Esophagus muscularis mucosa (tissue), 4 donors: ENCODE measurements at regions of chr3 and their contacts with region 1.

Region 1: DNA sequence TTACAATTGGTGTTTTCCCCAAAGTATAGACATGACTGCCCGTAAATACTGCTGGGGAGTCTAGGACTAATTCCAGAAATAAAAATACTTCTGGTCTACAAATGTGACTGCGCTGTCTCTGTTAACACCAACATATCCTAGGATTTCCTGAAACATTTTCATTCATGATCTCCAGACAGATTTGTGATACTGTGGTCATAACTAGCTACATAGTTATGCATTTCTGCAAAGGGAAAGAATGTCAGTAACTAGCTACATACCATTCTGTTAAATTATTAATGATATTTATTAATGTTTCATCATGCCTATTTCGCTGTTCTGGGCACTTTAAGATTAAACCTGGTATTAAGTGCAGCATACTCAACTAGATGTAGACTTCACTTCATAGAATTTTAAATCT is 33.3 kb downstream of the SETD5 start:
- DNase-seq: no peak
- H3K4me3 ChIP-seq: no peak overlapping the region
- H3K27ac ChIP-seq: no peak overlapping the region
- H3K4me1 ChIP-seq: peaks cover 10 to 26% (median 15%) of the 10 kb centered on the region in 4 donors
- H3K27me3 ChIP-seq: no peaks in the 10 kb centered on the region
- CTCF ChIP-seq: no peak
- EP300 ChIP-seq: no peak
- POLR2A ChIP-seq: no peak

Region 2: GRCh38 chr3:9280451-9281219 is 150.1 kb before region 1 on chr3:
- intact Hi-C with region 1: no loop called
- DNase-seq: no peak
- H3K4me3 ChIP-seq: no peak overlapping the region
- H3K27ac ChIP-seq: no peak overlapping the region
- H3K4me1 ChIP-seq: peaks cover 0 to 6% (median 0%) of the 10 kb centered on the region in 4 donors
- H3K27me3 ChIP-seq: no peaks in the 10 kb centered on the region
- CTCF ChIP-seq: no peak
- EP300 ChIP-seq: no peak
- POLR2A ChIP-seq: no peak

Region 3: DNA sequence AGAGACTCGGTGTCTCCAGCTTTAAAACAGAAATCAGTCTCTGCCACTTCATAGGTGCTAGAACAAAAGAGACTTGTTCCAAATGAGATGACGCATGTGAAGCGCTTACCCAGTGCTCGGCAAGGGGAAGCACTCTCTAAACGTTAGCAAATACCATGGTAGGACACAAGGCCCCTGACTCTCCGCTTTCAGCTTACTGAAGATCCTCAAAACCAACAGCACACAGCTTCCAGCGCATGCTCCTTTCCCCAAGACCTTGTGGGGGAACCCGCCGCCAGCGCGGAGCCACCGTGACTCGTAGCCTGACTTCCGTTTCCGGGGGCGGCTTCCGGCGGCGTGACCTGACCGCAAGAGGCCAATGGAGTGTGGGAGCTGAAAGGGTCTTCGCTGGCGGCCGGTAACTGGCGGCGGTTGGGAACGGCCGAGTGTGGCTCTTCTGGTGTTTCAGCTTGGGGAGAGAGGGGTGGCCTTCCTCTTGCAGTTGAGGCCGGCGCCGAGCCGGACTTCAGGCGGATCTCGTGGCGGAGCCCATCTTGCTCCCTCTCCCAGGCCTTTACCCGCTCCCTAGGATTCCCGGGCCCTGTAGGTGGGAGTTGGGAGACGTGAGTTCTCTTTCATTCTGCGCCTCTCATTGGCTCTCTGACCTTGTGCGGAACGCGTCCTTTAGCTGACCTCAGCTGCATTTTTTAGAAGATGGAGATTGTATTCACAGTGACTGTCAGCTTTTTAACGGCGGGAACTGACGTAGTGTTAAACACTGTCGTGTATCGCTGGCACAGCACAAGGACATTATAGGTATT is 67.8 kb before region 1 on chr3 and contains the start of gene THUMPD3:
- intact Hi-C with region 1: loop called (anchors 5 kb)
- DNase-seq: peak; percentile 97
- H3K4me3 ChIP-seq: peak within 1 kb of the TSS; percentile 69 to 78 (median 76)
- H3K27ac ChIP-seq: peak within 1 kb of the TSS; percentile 84 to 93 (median 92)
- H3K4me1 ChIP-seq: peaks cover 17 to 31% (median 25%) of the 10 kb centered on the region in 4 donors
- H3K27me3 ChIP-seq: no peaks in the 10 kb centered on the region
- CTCF ChIP-seq: no peak
- EP300 ChIP-seq: peak; percentile 28
- POLR2A ChIP-seq: peak; percentile 63
- total RNA-seq, gene THUMPD3: 23.8 to 37.4 (median 26.1) TPM

Region 4: DNA sequence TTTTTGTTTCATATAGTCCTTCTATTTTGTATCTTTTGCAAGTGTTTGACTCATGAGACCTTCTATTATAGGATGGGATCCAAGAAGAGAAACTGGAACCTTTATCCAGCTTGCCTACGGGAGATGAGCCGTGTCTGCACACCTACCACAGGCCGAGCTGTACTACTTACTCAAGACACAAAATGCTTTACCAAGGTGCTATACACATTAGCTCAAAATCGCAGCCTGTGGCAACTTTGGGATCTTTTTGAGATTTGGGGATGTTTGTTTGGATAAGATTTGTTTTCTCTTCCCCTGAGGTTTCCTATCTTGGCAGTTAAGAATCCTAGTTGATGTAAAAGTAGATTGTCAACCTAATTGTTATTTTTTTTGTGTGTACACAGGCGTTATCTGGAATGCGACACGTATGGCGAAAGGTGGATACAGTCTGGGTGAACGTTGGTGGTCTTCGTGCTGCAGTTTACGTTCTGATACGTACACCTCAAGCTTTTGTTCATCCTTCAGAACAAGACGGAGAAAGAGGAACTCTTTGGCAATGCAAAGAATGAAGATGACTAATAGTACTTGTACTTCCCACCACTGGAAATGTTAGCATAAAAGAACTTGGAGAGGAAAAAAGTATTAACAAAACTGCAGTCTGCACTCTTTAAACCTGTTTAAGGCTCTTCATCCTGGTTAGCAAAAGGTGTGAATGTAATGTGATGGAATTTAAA is 46.4 kb before region 1 on chr3:
- intact Hi-C with region 1: loop called (anchors 5 kb)
- DNase-seq: no peak
- H3K4me3 ChIP-seq: no peak overlapping the region
- H3K27ac ChIP-seq: peak overlapping the region in 1 of 4 donors; percentile 28
- H3K4me1 ChIP-seq: peaks cover 0 to 3% (median 2%) of the 10 kb centered on the region in 4 donors
- H3K27me3 ChIP-seq: no peaks in the 10 kb centered on the region
- CTCF ChIP-seq: no peak
- EP300 ChIP-seq: no peak
- POLR2A ChIP-seq: no peak

Region 5: DNA sequence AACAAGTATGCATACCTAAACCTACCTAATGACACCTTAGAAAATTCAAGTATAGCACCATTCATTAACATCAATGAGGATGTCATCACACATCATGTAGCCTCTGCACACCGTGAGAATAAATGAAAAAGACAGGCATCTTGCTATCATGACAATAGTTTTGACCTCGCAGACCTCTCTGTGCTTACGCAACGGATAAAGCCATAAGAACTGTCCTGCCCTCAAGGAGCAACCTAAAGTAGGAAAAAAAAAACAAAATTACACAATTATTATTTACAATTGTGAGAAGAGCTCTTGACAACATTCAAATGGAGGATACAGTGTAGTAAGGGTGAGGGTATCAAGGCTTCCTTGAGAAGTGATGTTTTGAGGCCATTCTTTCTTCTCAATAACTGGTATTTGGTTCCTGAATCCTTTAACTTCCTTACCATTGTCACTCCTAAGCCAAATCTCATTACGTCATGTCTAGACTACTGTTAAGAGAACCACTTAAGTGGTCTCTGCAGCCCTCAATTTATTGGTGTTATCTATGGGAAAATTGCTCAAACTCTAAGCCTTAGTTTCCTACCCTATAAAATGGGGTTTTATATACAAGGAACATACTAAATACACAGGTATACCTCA is 40.4 kb before region 1 on chr3:
- intact Hi-C with region 1: loop called (anchors 5 kb)
- DNase-seq: no peak
- H3K4me3 ChIP-seq: no peak overlapping the region
- H3K27ac ChIP-seq: peak overlapping the region in 1 of 4 donors; percentile 10
- H3K4me1 ChIP-seq: peaks cover 29 to 51% (median 47%) of the 10 kb centered on the region in 4 donors
- H3K27me3 ChIP-seq: no peaks in the 10 kb centered on the region
- CTCF ChIP-seq: no peak
- EP300 ChIP-seq: no peak
- POLR2A ChIP-seq: no peak